Motor neuron (in vitro differentiated cells): ENCODE measurements at regions of chr1 and their contacts with region 1.

Region 1: GRCh38 chr1:210143465-210144062 is 89.0 kb upstream of the SERTAD4 start:
- ATAC-seq: peak in 3 of 8 experiments; percentile 27 to 42 (median 34)
- H3K4me3 ChIP-seq: no peak overlapping the region
- H3K27ac ChIP-seq: no peak overlapping the region
- H3K4me1 ChIP-seq: no peaks in the 10 kb centered on the region

Region 2: GRCh38 chr1:210010161-210010560 is 133.4 kb before region 1 on chr1:
- in situ Hi-C with region 1: no loop called
- ATAC-seq: no peak
- H3K4me3 ChIP-seq: no peak overlapping the region
- H3K27ac ChIP-seq: no peak overlapping the region
- H3K4me1 ChIP-seq: no peaks in the 10 kb centered on the region

Region 3: GRCh38 chr1:210087058-210087457 is 56.5 kb before region 1 on chr1:
- in situ Hi-C with region 1: no loop called
- ATAC-seq: no peak
- H3K4me3 ChIP-seq: no peak overlapping the region
- H3K27ac ChIP-seq: no peak overlapping the region
- H3K4me1 ChIP-seq: no peaks in the 10 kb centered on the region

Region 4: GRCh38 chr1:210301615-210302000 is 158.0 kb after region 1 on chr1:
- in situ Hi-C with region 1: loop called in 5 of 9 experiments (anchors 10 to 25 kb)
- ATAC-seq: peak; percentile 16 to 52 (median 28)
- H3K4me3 ChIP-seq: no peak overlapping the region
- H3K27ac ChIP-seq: no peak overlapping the region
- H3K4me1 ChIP-seq: peaks cover 23 to 32% of the 10 kb centered on the region in 2 donors

Region 5: DNA sequence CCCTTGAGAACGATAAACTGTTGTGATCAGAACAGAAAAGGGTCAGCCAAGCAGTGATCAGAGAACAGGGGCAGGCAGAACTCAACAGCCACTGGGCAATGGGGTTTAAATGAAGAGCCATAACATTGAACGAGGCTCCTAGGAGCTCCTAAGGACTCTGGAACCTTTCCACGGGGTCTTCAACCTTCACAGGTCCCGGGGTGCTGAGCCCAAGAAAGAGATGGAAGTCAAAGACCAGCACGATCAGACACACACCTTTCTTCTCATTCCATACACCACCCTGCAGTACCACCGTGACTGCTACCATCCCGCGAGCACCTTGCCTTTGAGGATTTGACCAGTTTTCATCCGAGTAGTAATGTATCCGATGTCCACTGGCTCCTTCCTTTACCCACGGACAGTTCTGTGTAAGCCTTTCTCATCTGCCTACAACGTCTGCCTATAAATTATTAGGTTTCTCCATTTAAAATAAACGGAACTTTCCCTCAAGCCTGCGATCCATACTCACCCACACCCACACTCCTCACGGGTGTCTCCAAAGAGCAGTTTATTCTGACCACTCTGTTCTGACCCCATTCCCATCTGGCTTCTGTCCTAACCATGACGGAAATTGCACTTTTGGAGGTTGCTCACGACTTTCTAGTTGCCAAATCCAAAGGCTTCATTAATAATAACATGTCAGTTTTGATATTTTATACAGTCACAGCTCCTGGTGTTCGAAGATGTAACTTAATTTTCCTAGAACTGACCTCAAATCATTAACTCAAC is 168.3 kb after region 1 on chr1:
- in situ Hi-C with region 1: loop called in 8 of 9 experiments (anchors 10 to 25 kb)
- ATAC-seq: no peak
- H3K4me3 ChIP-seq: no peak overlapping the region
- H3K27ac ChIP-seq: no peak overlapping the region
- H3K4me1 ChIP-seq: no peaks in the 10 kb centered on the region

Region 6: GRCh38 chr1:210400043-210400840 is 256.7 kb after region 1 on chr1:
- in situ Hi-C with region 1: no loop called
- ATAC-seq: peak; percentile 58 to 100 (median 86)
- H3K4me3 ChIP-seq: no peak overlapping the region
- H3K27ac ChIP-seq: no peak overlapping the region
- H3K4me1 ChIP-seq: peaks cover 0 to 4% of the 10 kb centered on the region in 2 donors